Heart right ventricle (tissue), 16 donors: ENCODE measurements at regions of chrX and their contacts with region 1.

Region 1: GRCh38 chrX:20414762-20415445 is 148.2 kb upstream of the RPS6KA3 start:
- DNase-seq: no peak
- ATAC-seq: no peak
- H3K4me3 ChIP-seq: no peak overlapping the region
- H3K27ac ChIP-seq: no peak overlapping the region
- H3K4me1 ChIP-seq: peaks cover 0 to 12% (median 0%) of the 10 kb centered on the region in 9 donors
- H3K27me3 ChIP-seq: no peaks in the 10 kb centered on the region
- CTCF ChIP-seq: no peak

Region 2: DNA sequence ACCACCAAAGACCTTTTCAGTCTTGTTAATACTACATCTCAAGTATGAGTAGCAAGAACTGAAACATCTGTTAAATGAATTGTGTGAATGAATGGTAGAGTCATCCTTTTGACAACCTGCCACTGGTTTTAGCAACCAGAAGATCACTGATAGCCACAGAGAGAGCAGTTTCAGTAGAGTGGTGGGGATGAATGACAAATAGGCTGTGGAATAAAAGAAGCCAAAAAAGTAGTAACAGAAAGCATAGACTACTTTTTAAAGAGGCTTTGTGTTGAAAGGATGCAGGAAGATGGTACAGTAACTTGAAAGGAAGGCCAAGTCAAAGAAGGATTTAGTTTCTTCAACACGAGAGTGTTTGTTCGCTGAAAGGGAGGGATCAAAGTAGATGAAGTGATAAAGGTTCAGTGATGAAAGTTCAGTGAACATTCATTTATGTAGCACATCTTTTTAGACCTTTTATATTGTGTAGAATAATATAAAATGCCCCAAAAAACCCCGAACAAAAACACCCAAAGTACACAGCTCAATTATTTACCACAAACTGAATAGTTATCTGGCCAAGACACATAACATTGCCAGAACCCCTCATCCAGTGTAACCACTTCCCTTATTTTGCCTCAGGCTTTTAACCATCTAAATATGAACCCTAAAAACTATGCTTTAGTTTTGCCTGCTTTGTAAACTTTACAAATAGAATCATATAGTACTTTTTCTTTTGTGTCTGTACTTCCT is 233.1 kb before region 1 on chrX:
- intact Hi-C with region 1: no loop called
- DNase-seq: no peak
- ATAC-seq: no peak
- H3K4me3 ChIP-seq: no peak overlapping the region
- H3K27ac ChIP-seq: no peak overlapping the region
- H3K4me1 ChIP-seq: no peaks in the 10 kb centered on the region
- H3K27me3 ChIP-seq: peaks cover 0 to 66% (median 0%) of the 10 kb centered on the region in 7 donors
- CTCF ChIP-seq: no peak

Region 3: GRCh38 chrX:20382518-20383297 is 32.2 kb before region 1 on chrX:
- intact Hi-C with region 1: loop called in 1 of 10 experiments (anchors 2 kb)
- DNase-seq: no peak
- ATAC-seq: peak in 5 of 8 donors; percentile 80 to 97 (median 94)
- H3K4me3 ChIP-seq: no peak overlapping the region
- H3K27ac ChIP-seq: peak overlapping the region in 1 of 10 donors; percentile 34
- H3K4me1 ChIP-seq: no peaks in the 10 kb centered on the region
- H3K27me3 ChIP-seq: peaks cover 0 to 24% (median 0%) of the 10 kb centered on the region in 7 donors
- CTCF ChIP-seq: no peak

Region 4: GRCh38 chrX:20487227-20487626 is 72.3 kb after region 1 on chrX:
- intact Hi-C with region 1: no loop called
- DNase-seq: no peak
- ATAC-seq: no peak
- H3K4me3 ChIP-seq: no peak overlapping the region
- H3K27ac ChIP-seq: no peak overlapping the region
- H3K4me1 ChIP-seq: no peaks in the 10 kb centered on the region
- H3K27me3 ChIP-seq: peaks cover 0 to 15% (median 0%) of the 10 kb centered on the region in 7 donors
- CTCF ChIP-seq: no peak